ENCODE measurements at regions of chr15 and their contacts with region 1.

Region 1: GRCh38 chr15:56984681-56985481 is 66.4 kb downstream of the TCF12 start:
- DNase-seq: no peak

Region 2: GRCh38 chr15:55993111-55993803 is 991.6 kb before region 1 on chr15 and contains the start of gene NEDD4:
- intact Hi-C with region 1: no loop called
- DNase-seq: peak; percentile 94
- total RNA-seq, gene NEDD4: 10.5 TPM

Region 3: DNA sequence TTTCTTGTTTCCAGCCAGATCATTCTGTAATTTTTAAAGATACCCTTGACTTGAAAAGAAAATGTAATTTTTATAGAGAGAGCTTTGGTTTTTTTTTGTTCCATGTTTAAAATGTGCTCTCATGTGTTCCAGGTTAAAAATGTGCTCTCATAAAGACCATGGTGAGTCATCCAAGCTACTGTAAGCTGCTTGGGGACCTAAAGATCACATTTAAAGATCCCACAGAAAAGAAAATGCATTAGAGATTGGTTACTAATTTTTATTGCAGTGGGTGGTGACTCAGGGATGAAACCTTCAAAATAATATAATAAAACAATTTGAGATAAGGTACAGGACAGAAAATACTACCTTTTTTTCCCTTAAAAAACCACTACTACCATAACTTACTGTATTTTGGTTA is 55.5 kb before region 1 on chr15:
- intact Hi-C with region 1: loop called (anchors 5 kb)
- DNase-seq: no peak

Region 4: GRCh38 chr15:57451555-57451954 is 466.7 kb after region 1 on chr15:
- intact Hi-C with region 1: no loop called
- DNase-seq: no peak